ENCODE measurements at regions of chr5 and their contacts with region 1.

Region 1: GRCh38 chr5:97044052-97044451 is 98.4 kb downstream of the LIX1 start:
- DNase-seq: no peak

Region 2: GRCh38 chr5:98940581-98940980 is 1896.5 kb after region 1 on chr5:
- intact Hi-C with region 1: loop called in 1 of 2 experiments (anchors 5 kb)
- DNase-seq: no peak